Ovary (tissue), 10 donors: ENCODE measurements at regions of chr10 and their contacts with region 1.

Region 1: DNA sequence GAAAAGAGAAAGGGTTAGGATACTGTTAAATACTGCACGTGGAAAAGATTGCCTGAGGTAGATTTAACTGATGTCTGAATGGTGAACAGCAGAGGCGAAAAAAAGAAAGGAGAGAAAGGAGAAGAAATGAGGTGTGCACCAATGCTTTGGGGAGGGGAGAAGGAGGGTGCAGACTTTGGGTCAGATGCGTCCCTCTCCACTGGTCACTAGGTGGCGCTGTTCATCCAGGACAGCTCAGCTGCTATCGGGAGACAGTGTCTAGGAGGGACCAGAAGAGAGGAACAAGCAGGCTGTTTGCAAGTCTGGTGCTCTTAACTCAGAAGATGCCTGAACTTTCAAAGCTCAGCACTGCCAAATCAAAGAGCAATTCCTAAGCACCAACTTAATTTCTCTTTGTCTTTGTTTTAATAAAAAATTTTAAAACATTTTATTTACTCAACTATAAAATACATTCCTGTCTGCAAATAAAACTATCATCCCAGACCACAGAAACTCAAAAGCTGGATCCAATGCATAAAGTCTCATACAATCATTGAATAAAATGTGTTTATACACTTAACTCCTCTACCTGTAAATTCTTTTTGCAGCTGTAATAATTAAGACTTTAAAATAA is 83.9 kb upstream of the PDLIM1 start:
- DNase-seq: peak; percentile 54 to 77 (median 67)
- H3K4me3 ChIP-seq: no peak overlapping the region
- H3K27ac ChIP-seq: no peak overlapping the region
- H3K4me1 ChIP-seq: no peaks in the 10 kb centered on the region
- H3K27me3 ChIP-seq: no peaks in the 10 kb centered on the region
- CTCF ChIP-seq: peak; percentile 52 to 65 (median 57)
- EP300 ChIP-seq: no peak
- POLR2A ChIP-seq: no peak

Region 2: DNA sequence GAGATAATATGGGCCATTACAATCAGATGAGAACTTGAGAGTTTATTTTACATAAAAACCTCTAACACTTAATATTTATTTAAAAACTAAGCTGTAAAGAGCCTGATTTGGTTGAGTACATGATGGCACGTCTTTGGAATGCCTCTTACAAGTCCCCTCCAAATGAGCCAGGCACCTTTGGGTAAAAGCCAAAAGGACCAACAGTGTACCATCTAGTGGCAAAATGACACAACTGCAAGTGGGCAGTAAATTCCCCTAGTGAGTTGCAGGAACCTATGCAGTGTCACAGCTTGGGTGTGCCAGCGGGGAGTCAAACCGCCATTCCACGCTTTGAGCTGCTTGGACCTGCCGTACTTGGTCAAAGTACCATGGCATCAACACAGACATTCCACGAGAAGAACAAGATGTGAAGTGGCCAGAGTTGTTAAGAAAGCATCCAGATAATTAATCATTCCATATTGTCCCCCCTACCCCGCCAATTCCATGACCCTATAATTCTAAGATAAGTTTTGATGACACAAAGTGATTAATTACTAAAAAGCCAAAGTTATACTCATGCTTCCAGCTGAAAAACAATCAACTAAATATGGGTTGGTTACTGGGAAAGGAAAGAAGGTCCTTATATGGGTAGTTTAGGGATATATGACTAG is 71.3 kb after region 1 on chr10:
- intact Hi-C with region 1: loop called in 1 of 4 experiments (anchors 10 kb)
- DNase-seq: no peak
- H3K4me3 ChIP-seq: no peak overlapping the region
- H3K27ac ChIP-seq: no peak overlapping the region
- H3K4me1 ChIP-seq: peaks cover 10% of the 10 kb centered on the region
- H3K27me3 ChIP-seq: no peaks in the 10 kb centered on the region
- CTCF ChIP-seq: peak in 2 of 3 donors; percentile 29 to 32
- EP300 ChIP-seq: peak; percentile 36
- POLR2A ChIP-seq: no peak

Region 3: DNA sequence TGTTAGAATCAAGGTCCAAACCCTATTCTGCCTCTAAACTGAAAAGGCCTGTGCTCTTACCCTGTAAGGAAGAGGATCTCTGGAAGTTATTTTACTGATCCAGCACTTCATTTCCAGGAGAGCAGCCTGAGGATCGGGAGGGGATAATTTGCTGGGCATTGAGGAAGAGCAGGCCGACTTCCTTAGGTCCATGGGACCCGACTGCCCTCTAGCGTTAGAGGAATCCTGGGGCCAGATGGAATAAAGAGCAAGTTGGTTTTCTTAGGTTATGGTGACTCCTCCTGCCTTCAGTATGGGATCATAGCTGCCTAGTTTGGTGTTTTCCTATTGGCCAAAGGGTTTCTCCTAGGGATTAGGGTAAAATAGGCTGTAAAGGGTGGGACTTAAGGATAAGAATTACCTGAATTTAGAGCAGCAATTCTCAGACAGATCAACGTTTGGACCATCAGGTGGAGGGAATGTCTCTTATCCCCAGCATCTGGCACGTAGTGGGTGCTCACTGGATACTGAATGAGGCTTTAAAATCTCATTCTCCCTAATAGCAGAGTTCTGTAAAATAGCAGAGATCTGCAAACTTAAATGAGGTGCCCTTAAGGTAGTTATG is 226.5 kb after region 1 on chr10:
- intact Hi-C with region 1: loop called (anchors 5 to 10 kb)
- DNase-seq: peak; percentile 71 to 84 (median 81)
- H3K4me3 ChIP-seq: no peak overlapping the region
- H3K27ac ChIP-seq: no peak overlapping the region
- H3K4me1 ChIP-seq: no peaks in the 10 kb centered on the region
- H3K27me3 ChIP-seq: no peaks in the 10 kb centered on the region
- CTCF ChIP-seq: peak; percentile 78 to 88 (median 84)
- EP300 ChIP-seq: no peak
- POLR2A ChIP-seq: no peak

Region 4: GRCh38 chr10:95618126-95618525 is 243.4 kb after region 1 on chr10:
- intact Hi-C with region 1: no loop called
- DNase-seq: no peak
- H3K4me3 ChIP-seq: no peak overlapping the region
- H3K27ac ChIP-seq: no peak overlapping the region
- H3K4me1 ChIP-seq: no peaks in the 10 kb centered on the region
- H3K27me3 ChIP-seq: no peaks in the 10 kb centered on the region
- CTCF ChIP-seq: no peak
- EP300 ChIP-seq: no peak
- POLR2A ChIP-seq: no peak

Region 5: DNA sequence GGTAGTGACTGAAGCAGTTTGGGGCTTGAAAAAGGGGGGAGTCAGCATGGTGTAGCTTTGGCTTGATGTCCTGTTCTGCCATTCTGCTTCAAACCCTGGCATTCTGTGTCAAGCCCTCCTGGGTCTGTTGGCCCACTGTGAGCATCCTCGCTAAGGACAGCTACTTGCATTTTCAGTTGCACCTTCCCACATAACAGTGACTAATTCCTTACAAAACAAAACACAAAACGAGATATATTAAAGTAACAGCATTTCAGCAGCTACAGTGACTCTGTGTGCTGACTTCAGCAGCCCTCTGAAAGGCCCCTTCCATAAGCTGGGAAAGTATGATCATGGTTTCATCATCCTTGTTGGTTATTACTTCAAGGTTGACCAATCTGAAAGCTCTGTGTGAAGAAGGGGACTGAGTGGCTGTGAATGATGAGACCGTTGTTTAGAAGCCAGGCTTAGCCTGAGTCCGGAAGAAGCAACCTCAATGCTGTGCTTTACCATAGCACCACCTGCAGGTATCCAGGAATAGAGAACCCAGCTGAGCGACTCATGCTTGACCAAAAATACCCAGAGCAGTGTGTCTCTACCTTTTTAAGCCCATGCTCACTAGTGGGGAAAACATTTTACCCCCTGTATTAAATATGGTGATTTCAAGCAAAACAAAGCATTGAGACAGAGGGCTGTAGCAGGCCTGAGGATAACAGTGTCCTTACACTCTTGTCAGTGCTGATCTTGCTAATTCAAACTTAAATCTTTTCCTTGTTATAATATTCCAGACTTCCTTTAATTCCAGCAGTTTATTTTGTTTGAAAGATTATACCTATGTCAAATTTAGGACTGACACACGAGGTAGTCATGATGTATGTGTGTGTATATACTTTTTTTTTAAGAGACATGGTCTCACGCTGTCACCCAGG is 490.5 kb after region 1 on chr10:
- intact Hi-C with region 1: no loop called
- DNase-seq: peak in 1 of 5 donors; percentile 16
- H3K4me3 ChIP-seq: no peak overlapping the region
- H3K27ac ChIP-seq: no peak overlapping the region
- H3K4me1 ChIP-seq: no peaks in the 10 kb centered on the region
- H3K27me3 ChIP-seq: no peaks in the 10 kb centered on the region
- CTCF ChIP-seq: no peak
- EP300 ChIP-seq: no peak
- POLR2A ChIP-seq: no peak

Region 6: DNA sequence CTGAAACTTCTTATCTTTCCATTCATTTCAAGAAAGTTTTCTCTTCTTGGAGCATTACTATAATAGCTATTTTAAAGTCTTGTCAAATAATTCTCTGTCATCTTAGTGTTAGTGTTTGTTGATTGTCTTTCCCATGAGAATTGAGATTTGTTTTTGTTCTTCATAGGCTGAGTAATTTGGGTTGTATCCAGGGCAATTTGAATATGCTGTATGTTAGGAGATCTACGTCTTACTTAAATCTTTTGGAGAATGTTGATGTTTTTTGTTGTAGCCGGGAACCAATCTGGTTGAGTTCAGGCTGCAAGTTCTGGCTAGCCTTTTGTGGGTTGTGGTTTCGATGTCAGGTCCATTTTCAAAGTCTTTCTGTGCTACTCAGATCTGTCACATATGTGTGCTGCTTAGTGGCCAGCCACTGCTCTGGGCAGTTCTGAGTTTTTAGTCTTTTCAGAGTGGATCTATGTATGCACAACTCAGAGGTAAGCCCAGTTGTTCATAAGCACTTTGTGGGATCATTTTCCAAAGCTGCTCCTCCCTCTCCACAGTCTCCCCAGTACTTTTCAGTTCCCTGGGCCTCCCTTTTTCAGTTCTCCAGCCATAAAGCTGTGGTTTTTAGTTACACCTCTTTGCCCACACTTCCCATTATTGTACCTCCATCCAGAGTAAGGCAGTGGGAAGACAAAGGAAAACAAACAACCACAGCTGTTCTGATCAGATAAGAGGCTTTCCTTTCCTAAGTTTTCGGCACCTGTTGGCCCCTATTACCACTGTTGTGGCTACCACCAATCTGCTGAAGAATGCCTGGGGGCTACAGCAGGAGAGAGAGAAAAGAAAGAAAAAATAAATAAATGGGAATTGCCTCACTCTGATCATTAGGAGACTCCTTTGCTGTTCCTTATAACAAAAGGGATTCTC is 664.0 kb after region 1 on chr10:
- intact Hi-C with region 1: no loop called
- DNase-seq: no peak
- H3K4me3 ChIP-seq: no peak overlapping the region
- H3K27ac ChIP-seq: no peak overlapping the region
- H3K4me1 ChIP-seq: no peaks in the 10 kb centered on the region
- H3K27me3 ChIP-seq: no peaks in the 10 kb centered on the region
- CTCF ChIP-seq: no peak
- EP300 ChIP-seq: no peak
- POLR2A ChIP-seq: no peak